Mammary epithelial cell (primary cell): ENCODE measurements at regions of chr19 and their contacts with region 1.

Region 1: GRCh38 chr19:9871626-9872338 is 36.7 kb downstream of the PIN1 start:
- DNase-seq: no peak
- H3K4me3 ChIP-seq: no peak overlapping the region
- H3K27ac ChIP-seq: no peak overlapping the region
- H3K4me1 ChIP-seq: no peaks in the 10 kb centered on the region
- H3K27me3 ChIP-seq: no peaks in the 10 kb centered on the region
- CTCF ChIP-seq: no peak

Region 2: DNA sequence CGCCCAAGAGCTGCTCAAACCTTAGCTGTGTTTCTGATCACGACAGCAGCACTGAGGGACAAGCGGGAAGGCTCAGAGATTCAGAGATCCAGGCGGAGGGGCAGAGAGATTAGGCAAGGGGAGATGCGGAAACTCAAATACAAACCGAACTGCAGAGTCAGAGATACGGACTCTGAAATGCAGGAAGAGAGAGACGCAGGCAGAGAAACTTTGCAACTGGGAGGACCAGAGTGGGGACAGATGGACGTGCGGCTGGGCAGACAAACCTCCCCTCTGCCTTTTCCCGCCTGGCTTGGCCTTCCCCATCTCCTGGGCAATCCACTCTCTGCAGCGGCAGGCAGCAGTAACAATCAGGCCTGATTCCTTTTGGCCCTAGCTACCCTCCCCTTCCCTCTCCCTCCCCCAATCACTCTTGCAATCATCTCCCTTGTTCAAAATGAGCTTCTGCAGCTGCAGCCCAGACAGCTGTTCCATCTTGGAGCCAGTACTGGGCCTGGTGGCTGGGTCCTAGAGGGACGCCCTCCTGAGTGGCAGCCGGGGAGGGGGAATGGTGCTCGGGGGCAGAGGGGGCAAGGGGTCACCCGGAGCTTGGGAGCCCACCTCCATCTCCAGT is 34.8 kb after region 1 on chr19:
- CTCF ChIA-PET with region 1: no interaction called
- dilution Hi-C with region 1: loop called (anchors 5 kb)
- in situ Hi-C with region 1: no loop called
- intact Hi-C with region 1: no loop called
- DNase-seq: no peak
- H3K4me3 ChIP-seq: no peak overlapping the region
- H3K27ac ChIP-seq: no peak overlapping the region
- H3K4me1 ChIP-seq: no peaks in the 10 kb centered on the region
- H3K27me3 ChIP-seq: no peaks in the 10 kb centered on the region
- CTCF ChIP-seq: no peak

Region 3: GRCh38 chr19:9996541-9996940 is 124.8 kb after region 1 on chr19:
- CTCF ChIA-PET with region 1: no interaction called
- dilution Hi-C with region 1: no loop called
- in situ Hi-C with region 1: no loop called
- intact Hi-C with region 1: no loop called
- DNase-seq: no peak
- H3K4me3 ChIP-seq: no peak overlapping the region
- H3K27ac ChIP-seq: no peak overlapping the region
- H3K4me1 ChIP-seq: no peaks in the 10 kb centered on the region
- H3K27me3 ChIP-seq: no peaks in the 10 kb centered on the region
- CTCF ChIP-seq: no peak